H1 (cell line): ENCODE measurements at regions of chr2 and their contacts with region 1.

Region 1: DNA sequence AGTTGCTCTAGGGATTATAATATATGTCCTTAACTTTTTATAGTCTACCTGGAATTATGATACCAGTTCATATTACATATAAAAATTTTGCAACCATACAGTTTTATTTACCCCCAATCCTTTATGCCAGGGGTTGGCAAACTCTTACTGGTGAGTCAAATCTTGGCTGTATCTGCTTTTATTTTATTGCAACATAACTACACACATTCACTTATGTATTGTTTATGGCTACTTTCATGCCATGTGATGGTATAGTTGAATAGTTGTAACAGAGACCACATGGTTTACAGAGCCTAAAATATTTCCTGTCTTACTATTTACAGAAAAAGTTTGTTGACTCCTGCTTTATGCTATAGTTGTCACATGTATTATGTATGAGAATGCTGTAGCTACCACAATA is 25.8 kb upstream of the DLX2 start:
- DNase-seq: no peak
- H3K4me3 ChIP-seq: no peak overlapping the region
- H3K27ac ChIP-seq: no peak overlapping the region
- H3K4me1 ChIP-seq: peaks cover 0 to 12% (median 7%) of the 10 kb centered on the region in 4 experiments; a peak in 5 of 7 replicates
- H3K27me3 ChIP-seq: no peaks in the 10 kb centered on the region; a peak in 2 of 7 replicates
- CTCF ChIP-seq: no peak
- EP300 ChIP-seq: no peak
- POLR2A ChIP-seq: no peak
- RAD21 ChIP-seq: no peak

Region 2: DNA sequence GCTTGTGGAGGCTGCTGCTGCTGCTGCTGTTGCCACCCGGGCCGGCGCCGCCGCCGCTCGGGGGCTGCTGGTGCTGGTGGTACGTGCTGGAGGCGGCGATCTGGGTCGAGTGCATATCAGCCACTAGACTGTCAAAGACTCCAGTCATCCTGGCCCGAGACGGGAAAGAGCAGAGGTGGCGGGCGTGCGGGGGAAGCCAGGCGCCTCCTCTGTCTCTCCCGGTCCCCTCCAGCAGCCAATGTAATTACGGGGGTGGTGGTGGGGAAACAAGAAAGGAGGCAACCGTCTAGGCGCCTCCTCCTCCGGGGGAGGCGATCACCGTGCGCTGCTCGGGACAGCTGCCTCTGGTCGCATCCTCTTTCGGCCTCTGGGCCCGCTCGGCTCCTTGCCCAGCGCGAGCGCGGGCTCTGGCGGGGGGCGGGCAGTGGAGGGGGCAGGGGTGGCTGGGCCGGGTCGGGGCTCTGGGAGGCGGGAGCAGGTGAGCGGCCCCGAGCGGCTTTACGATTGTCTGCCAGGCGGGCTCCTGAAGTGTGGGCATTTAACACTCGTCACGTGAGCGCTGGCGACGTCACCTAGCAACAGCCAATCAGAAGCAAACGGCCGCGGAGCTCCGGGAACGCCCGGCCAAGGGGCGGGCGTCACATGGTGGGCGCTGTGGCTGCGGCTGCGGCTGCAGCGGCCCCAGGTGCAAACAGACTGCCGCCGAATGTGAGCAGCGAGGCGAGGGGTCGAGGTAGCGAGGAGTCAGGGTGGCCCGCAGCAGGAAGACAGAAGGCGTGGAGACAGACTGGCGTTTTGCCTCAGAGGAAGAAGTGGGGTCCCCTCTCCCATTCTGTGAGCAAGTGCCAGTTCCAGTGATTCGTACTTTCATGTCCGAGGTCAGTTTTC is 25.8 kb before region 1 on chr2 and contains the start of gene DLX2:
- CTCF ChIA-PET with region 1: interaction called, 30 read pairs
- POLR2A ChIA-PET with region 1: no interaction called
- DNase-seq: peak; percentile 86 to 92
- H3K4me3 ChIP-seq: peak within 1 kb of the TSS; percentile 33 to 59 (median 46)
- H3K27ac ChIP-seq: no peak within 1 kb of the TSS
- H3K4me1 ChIP-seq: peaks cover 6 to 43% (median 21%) of the 10 kb centered on the region in 4 experiments
- H3K27me3 ChIP-seq: peaks cover 78 to 100% (median 93%) of the 10 kb centered on the region in 4 experiments
- CTCF ChIP-seq: no peak
- EP300 ChIP-seq: no peak
- POLR2A ChIP-seq: no peak
- RAD21 ChIP-seq: no peak
- total RNA-seq, gene DLX2: 0.13 and 0.45 TPM in 2 replicates

Region 3: GRCh38 chr2:172113617-172114016 is 14.9 kb before region 1 on chr2:
- CTCF ChIA-PET with region 1: interaction called, 38 read pairs
- POLR2A ChIA-PET with region 1: no interaction called
- DNase-seq: no peak
- H3K4me3 ChIP-seq: no peak overlapping the region
- H3K27ac ChIP-seq: no peak overlapping the region
- H3K4me1 ChIP-seq: peaks cover 4 to 11% (median 6%) of the 10 kb centered on the region in 4 experiments; a peak in 5 of 7 replicates
- H3K27me3 ChIP-seq: peaks cover 18 to 34% (median 28%) of the 10 kb centered on the region in 4 experiments
- CTCF ChIP-seq: peak in 2 of 3 experiments; percentile 42 to 46; a peak in 3 of 4 replicates
- EP300 ChIP-seq: no peak
- POLR2A ChIP-seq: no peak
- RAD21 ChIP-seq: peak; percentile 77 to 83